PC-3 (cell line): ENCODE measurements at regions of chrX and their contacts with region 1.

Region 1: DNA sequence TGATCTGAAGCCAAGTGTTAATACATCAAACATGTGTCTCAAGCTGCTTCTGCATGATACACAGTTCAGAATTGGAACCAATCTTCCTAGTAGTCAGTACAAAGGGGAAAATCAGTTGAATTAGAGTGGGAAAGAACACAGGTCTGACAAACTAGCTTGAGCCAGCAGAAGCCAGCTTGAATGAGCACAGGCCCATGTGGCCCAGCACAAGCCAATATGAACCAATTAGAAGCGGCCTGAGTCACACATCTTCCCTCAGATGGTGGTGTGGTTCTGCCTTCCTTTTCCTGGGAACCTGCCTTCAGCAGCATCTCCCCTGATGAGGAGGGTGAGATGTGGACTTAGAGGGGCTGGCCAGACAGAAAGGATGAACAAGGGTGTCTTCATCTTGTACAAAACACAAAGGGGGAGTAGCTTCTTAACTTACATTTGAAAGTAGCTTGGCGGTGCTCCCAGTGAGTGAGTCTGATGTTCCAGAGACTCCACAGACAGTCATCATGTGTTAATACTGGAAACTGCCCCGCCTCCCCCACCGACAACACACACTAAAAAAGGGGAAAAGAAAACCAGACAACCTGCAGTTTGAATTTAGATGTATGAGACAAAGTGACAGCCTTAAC is 72.0 kb downstream of the FRMPD4 start:
- DNase-seq: peak; percentile 84
- ATAC-seq: peak; percentile 80
- H3K4me3 ChIP-seq: peak overlapping the region; percentile 44
- H3K27ac ChIP-seq: peak overlapping the region; percentile 94
- H3K4me1 ChIP-seq: peaks cover 33% of the 10 kb centered on the region
- H3K27me3 ChIP-seq: no peaks in the 10 kb centered on the region
- CTCF ChIP-seq: no peak

Region 2: DNA sequence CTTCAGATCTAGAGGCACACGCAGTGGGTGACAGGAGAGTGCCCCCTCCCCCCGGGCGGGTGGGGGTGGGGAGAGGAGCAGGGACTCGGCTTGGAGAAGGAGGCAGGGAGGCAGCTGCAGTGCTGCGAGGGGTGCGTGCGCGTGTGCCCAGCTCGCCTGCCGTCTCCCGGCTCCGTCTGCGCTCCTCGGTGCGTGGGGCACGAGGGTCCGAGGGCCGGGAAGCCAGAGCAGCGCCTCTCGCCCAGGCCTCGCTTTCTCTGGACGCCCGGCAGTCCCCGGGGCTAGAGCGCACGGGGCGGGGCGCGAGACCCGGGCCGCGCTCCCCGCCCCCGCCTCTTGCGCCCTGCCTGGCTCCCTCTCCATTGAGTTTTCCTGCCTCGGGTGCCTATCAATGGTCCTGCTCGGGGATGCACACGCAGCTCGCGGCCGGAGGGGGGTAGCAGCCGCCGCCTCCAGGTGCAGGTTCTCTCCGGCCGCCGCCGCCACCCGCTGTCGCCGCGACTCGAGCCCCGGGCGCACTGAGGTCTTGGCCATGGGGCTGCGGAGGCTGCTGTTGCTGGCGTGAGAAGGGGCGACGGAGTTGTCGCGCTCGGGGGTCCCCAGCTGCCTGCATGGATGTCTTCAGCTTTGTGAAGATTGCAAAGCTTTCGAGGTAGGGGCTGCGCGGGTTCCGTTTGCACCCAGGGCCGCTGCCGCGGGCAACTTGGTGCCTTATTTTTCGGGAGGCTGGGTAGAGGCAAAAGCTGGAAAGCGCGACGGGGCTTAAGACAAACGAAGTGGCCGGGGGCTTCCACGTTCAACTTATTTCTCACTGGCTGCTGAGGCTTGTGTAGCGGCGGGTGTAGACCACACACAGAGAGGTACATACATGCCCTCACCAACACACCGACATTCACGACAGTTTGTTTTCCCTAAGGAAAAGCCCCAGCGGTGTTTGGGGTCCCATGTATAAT is 71.7 kb before region 1 on chrX and contains the start of gene FRMPD4:
- CTCF ChIA-PET with region 1: no interaction called
- POLR2A ChIA-PET with region 1: no interaction called
- intact Hi-C with region 1: loop called (anchors 1 kb)
- DNase-seq: peak; percentile 25
- ATAC-seq: peak; percentile 45
- H3K4me3 ChIP-seq: peak within 1 kb of the TSS; percentile 78
- H3K27ac ChIP-seq: no peak within 1 kb of the TSS
- H3K4me1 ChIP-seq: peaks cover 8% of the 10 kb centered on the region
- H3K27me3 ChIP-seq: no peaks in the 10 kb centered on the region
- CTCF ChIP-seq: peak; percentile 32; the same call in 1 of the 2 replicates
- total RNA-seq, gene FRMPD4: 0.15 and 0.23 TPM in 2 replicates

Region 3: DNA sequence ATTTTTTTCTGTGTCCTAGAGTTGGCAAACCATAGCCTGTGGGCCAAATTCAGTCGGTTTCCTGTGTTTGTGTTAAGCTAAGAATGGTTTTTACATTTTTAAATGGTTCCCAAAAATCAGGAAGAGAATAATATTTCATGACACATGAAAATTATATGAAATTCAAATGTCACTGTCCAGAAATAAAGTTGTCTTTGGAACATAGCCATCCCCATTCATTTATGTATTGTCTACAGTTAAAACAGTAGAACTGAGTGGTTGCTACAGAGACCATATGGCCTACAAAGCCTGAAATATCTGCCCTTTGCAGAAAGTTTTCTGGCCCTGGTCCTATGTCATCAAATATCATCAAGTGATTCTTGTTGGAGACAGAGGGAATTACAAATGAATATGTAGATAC is 56.6 kb before region 1 on chrX:
- CTCF ChIA-PET with region 1: no interaction called
- POLR2A ChIA-PET with region 1: interaction called, 3 read pairs
- intact Hi-C with region 1: loop called (anchors 5 kb)
- DNase-seq: no peak
- ATAC-seq: no peak
- H3K4me3 ChIP-seq: no peak overlapping the region
- H3K27ac ChIP-seq: no peak overlapping the region
- H3K4me1 ChIP-seq: peaks cover 21% of the 10 kb centered on the region
- H3K27me3 ChIP-seq: no peaks in the 10 kb centered on the region
- CTCF ChIP-seq: no peak

Region 4: GRCh38 chrX:12225107-12225506 is 14.8 kb after region 1 on chrX:
- CTCF ChIA-PET with region 1: no interaction called
- POLR2A ChIA-PET with region 1: no interaction called
- intact Hi-C with region 1: loop called (anchors 1 kb)
- DNase-seq: peak; percentile 66
- ATAC-seq: peak; percentile 78
- H3K4me3 ChIP-seq: no peak overlapping the region
- H3K27ac ChIP-seq: peak overlapping the region; percentile 86
- H3K4me1 ChIP-seq: peaks cover 29% of the 10 kb centered on the region
- H3K27me3 ChIP-seq: no peaks in the 10 kb centered on the region
- CTCF ChIP-seq: no peak

Region 5: DNA sequence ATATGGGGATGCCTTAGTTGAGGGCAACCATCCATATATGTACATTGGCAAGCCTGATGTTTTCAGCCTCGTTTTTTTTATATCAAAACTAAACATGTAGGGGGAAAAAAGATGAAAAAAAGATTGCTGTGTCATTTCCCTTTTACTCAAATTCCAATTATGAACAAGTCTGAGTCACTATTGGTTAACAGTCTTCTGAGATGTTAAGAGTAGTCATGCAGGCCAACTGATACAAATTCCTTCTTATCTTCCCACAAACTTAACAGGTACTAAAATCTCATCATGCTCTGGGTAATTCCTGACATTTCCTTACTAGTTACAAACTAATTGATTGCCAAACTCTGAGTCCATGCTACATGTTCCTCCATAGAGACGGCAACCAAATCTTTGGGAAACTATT is 150.1 kb after region 1 on chrX:
- CTCF ChIA-PET with region 1: no interaction called
- POLR2A ChIA-PET with region 1: interaction called, 13 read pairs
- intact Hi-C with region 1: no loop called
- DNase-seq: peak; percentile 78
- ATAC-seq: peak; percentile 82
- H3K4me3 ChIP-seq: peak overlapping the region; percentile 29; the same call in 1 of the 2 replicates
- H3K27ac ChIP-seq: peak overlapping the region; percentile 95
- H3K4me1 ChIP-seq: peaks cover 22% of the 10 kb centered on the region
- H3K27me3 ChIP-seq: no peaks in the 10 kb centered on the region
- CTCF ChIP-seq: no peak